Activated CD4-positive, alpha-beta T cell treated with anti-CD3 and anti-CD28 coated beads for 36 hours (primary cell): ENCODE measurements at regions of chr10 and their contacts with region 1.

Region 1: DNA sequence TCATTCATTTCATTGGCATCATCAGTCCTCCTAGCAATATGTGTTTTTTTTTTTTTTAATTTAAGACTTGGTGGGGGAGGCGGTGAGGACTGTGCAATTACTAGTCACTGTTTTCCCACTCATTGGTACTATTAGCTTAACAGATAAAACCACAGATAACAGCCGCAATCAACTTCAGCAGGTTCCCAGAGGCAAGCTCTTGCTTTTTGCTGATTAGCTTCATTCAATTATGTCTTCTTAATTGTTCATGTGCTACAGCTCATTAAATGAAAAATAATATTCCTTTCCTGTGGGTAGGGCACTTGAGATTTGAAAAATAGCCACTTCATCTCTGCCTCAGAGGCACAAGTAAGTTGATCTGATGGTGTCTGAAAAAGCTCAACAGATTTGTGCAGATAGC is 215.5 kb downstream of the PCDH15 start:
- DNase-seq: no peak
- ATAC-seq: no peak
- H3K4me3 Mint-ChIP-seq: no peak overlapping the region
- H3K27ac Mint-ChIP-seq: no peak overlapping the region
- H3K4me1 Mint-ChIP-seq: no peaks in the 10 kb centered on the region
- H3K27me3 Mint-ChIP-seq: no peaks in the 10 kb centered on the region

Region 2: DNA sequence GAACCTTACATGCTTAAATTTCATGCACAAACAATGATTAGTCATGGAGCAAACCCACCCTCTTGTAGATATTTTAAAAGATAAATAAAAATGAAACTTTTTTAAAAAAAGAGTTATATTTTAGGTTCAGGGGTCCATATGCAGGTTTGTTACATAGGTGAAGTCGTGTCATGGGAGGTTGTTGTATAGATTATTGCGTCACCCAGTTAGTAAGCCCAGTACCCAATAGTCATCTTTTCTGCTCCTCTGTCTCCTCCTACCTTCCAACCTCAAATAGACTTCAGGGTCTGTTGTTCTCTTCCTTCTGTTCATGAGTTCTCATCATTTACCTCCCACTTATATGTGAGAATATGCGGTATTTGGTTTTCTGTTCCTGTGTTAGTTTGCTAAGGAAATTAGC is 271.1 kb before region 1 on chr10:
- CTCF ChIA-PET with region 1: no interaction called
- POLR2A ChIA-PET with region 1: no interaction called
- intact Hi-C with region 1: no loop called
- DNase-seq: no peak
- ATAC-seq: no peak
- H3K4me3 Mint-ChIP-seq: no peak overlapping the region
- H3K27ac Mint-ChIP-seq: no peak overlapping the region
- H3K4me1 Mint-ChIP-seq: no peaks in the 10 kb centered on the region
- H3K27me3 Mint-ChIP-seq: no peaks in the 10 kb centered on the region

Region 3: DNA sequence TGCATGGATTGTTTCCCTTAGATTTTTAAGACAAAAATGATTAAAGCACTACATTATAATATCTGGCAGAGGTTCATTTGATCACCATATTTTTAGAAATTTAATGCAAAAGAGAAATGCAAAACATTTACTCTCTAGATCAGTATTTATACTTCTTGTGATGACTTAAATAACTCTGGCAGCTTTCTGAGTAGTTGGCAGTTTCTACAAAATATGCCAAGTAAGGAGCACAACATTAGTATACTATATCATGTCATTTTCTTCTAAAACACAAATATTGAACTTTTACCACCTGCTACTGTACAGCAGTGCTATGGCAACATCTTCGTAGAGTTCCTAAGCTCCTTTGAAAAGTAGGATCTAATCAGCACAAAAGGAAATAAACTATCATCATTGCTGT is 59.8 kb before region 1 on chr10:
- CTCF ChIA-PET with region 1: no interaction called
- POLR2A ChIA-PET with region 1: no interaction called
- intact Hi-C with region 1: loop called in 1 of 2 experiments (anchors 10 kb)
- DNase-seq: no peak
- ATAC-seq: no peak
- H3K4me3 Mint-ChIP-seq: no peak overlapping the region
- H3K27ac Mint-ChIP-seq: no peak overlapping the region
- H3K4me1 Mint-ChIP-seq: no peaks in the 10 kb centered on the region
- H3K27me3 Mint-ChIP-seq: no peaks in the 10 kb centered on the region

Region 4: GRCh38 chr10:55174419-55174818 is 588.8 kb after region 1 on chr10:
- CTCF ChIA-PET with region 1: no interaction called
- POLR2A ChIA-PET with region 1: no interaction called
- intact Hi-C with region 1: no loop called
- DNase-seq: no peak
- ATAC-seq: no peak
- H3K4me3 Mint-ChIP-seq: no peak overlapping the region
- H3K27ac Mint-ChIP-seq: no peak overlapping the region
- H3K4me1 Mint-ChIP-seq: no peaks in the 10 kb centered on the region
- H3K27me3 Mint-ChIP-seq: no peaks in the 10 kb centered on the region